ENCODE measurements at regions of chr6 and their contacts with region 1.

Region 1: GRCh38 chr6:85482905-85483700 is 33.2 kb downstream of the NT5E start:
- DNase-seq: no peak
- ATAC-seq: peak; percentile 98
- H3K4me3 ChIP-seq: no peak overlapping the region
- H3K27ac ChIP-seq: no peak overlapping the region
- H3K4me1 ChIP-seq: no peaks in the 10 kb centered on the region
- H3K27me3 ChIP-seq: no peaks in the 10 kb centered on the region
- CTCF ChIP-seq: peak; percentile 98 to 100 (median 99); a peak in 5 of 6 replicates
- EP300 ChIP-seq: no peak
- POLR2A ChIP-seq: no peak
- RAD21 ChIP-seq: peak; percentile 91

Region 2: DNA sequence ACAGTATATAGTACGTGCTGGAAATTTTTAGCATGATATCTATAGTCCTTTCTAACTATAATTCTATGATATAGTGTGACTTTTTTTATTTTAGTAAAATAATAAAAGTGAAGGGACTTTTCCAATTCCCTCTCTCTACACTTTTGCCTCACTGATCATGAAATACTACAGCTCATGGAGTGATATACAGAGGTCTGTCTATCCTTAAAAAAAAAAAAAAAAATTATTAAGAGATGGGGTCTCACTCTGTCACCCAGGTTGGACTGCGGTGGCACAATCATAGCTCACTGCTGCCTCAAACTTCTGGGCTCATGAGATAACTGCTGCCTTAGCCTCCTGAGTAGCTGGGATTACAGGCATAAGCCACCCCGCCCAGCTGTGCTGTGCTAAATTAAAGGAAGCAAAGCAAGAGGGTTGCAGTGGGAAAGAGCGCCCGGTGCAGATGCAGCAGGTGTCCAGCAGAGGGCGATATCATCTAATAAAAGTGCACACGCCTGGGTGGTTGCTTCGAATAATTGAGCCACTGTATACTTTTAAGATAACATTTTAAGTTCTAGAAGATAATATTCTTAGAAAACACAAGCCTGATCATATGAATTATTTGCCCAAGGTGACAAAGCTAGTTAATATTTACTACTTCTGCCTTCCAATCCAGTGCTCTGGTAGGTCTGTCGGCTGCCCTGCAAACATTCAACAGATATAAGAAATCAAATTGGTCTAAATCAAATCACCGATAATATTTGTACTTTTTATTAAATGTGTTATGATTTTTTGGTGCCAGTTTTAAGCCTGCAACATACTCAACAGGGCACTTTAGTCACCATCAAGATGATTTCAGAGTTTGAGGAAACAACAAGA is 128.1 kb before region 1 on chr6:
- CTCF ChIA-PET with region 1: interaction called, 217 read pairs
- POLR2A ChIA-PET with region 1: interaction called, 3 read pairs
- RAD21 ChIA-PET with region 1: interaction called, 113 read pairs
- SMC1A ChIA-PET with region 1: interaction called, 162 read pairs
- in situ Hi-C with region 1: loop called (anchors 5 kb)
- intact Hi-C with region 1: loop called (anchors 1 kb)
- DNase-seq: peak; percentile 25
- ATAC-seq: peak; percentile 99
- H3K4me3 ChIP-seq: no peak overlapping the region
- H3K27ac ChIP-seq: no peak overlapping the region
- H3K4me1 ChIP-seq: no peaks in the 10 kb centered on the region
- H3K27me3 ChIP-seq: no peaks in the 10 kb centered on the region
- CTCF ChIP-seq: peak; percentile 90 to 93 (median 91)
- EP300 ChIP-seq: no peak
- POLR2A ChIP-seq: no peak
- RAD21 ChIP-seq: peak; percentile 96

Region 3: DNA sequence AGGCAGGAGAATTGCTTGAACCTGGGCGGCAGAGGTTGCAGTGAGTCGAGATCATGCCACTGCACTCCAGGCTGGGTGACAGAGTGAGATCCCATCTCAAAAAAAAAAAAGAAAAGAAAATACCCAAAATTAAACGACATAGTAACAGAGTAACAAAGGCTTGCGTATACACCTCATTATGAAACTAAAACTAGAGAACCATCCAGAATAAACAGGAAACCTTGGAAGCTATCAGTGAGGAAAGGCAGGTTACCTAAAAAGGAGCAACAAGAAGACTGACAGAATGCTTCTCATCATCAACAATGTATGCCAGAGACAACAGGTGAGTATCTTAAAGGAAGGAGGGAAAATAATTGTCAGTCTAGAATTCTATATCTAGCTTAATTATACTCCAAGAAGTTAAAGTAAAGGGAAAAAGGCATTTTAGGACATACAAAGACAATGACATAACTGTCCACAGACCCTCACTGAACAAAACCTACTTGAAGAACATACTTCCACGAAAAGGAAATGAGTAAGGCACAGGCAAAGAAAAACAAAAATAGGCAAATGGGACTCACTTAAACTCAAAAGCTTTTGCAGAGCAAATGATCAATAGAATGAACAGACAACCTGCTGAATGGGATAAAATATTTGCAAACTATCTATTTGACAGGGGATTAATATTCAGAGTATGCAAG is 97.3 kb before region 1 on chr6:
- CTCF ChIA-PET with region 1: interaction called, 10 read pairs
- POLR2A ChIA-PET with region 1: no interaction called
- RAD21 ChIA-PET with region 1: interaction called, 5 read pairs
- SMC1A ChIA-PET with region 1: interaction called, 10 read pairs
- in situ Hi-C with region 1: no loop called
- intact Hi-C with region 1: no loop called
- DNase-seq: no peak
- ATAC-seq: no peak
- H3K4me3 ChIP-seq: no peak overlapping the region
- H3K27ac ChIP-seq: no peak overlapping the region
- H3K4me1 ChIP-seq: no peaks in the 10 kb centered on the region
- H3K27me3 ChIP-seq: no peaks in the 10 kb centered on the region
- CTCF ChIP-seq: no peak
- EP300 ChIP-seq: no peak
- POLR2A ChIP-seq: no peak
- RAD21 ChIP-seq: no peak

Region 4: GRCh38 chr6:85419046-85419759 is 63.9 kb before region 1 on chr6:
- CTCF ChIA-PET with region 1: interaction called, 17 read pairs
- POLR2A ChIA-PET with region 1: no interaction called
- RAD21 ChIA-PET with region 1: no interaction called
- SMC1A ChIA-PET with region 1: interaction called, 11 read pairs
- in situ Hi-C with region 1: no loop called
- intact Hi-C with region 1: no loop called
- DNase-seq: no peak
- ATAC-seq: peak; percentile 85
- H3K4me3 ChIP-seq: 0 out of 2 replicates have a peak overlapping the region, but pooled peaks have one; percentile 24
- H3K27ac ChIP-seq: 0 out of 2 replicates have a peak overlapping the region, but pooled peaks have one; percentile 15
- H3K4me1 ChIP-seq: peaks cover 9% of the 10 kb centered on the region
- H3K27me3 ChIP-seq: no peaks in the 10 kb centered on the region
- CTCF ChIP-seq: no peak
- EP300 ChIP-seq: peak in 1 of 2 experiments; percentile 74; a peak in 1 of 4 replicates
- POLR2A ChIP-seq: no peak
- RAD21 ChIP-seq: no peak

Region 5: DNA sequence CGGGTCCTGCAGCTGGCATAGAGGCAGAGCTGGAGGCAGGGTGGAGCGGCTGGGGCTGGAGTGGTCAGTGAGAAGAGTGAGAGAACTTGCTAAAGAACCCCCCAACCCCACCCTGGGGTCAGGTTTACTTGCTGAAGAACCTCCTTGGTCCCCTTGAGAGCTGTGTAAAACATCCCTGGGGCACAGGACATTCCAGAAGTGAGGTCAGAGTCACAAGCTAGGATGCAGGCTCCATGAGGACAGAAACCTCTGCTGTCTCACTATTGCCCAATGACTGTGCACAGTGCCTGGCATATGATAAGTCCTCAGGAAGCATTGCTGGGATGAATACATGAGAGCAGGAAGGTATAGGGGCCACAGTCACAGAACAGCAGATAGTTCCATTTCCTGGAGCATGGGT is 14.8 kb before region 1 on chr6:
- CTCF ChIA-PET with region 1: interaction called, 52 read pairs
- POLR2A ChIA-PET with region 1: no interaction called
- RAD21 ChIA-PET with region 1: interaction called, 25 read pairs
- SMC1A ChIA-PET with region 1: interaction called, 57 read pairs
- in situ Hi-C with region 1: no loop called
- intact Hi-C with region 1: no loop called
- DNase-seq: no peak
- ATAC-seq: no peak
- H3K4me3 ChIP-seq: no peak overlapping the region
- H3K27ac ChIP-seq: no peak overlapping the region
- H3K4me1 ChIP-seq: peaks cover 19% of the 10 kb centered on the region
- H3K27me3 ChIP-seq: no peaks in the 10 kb centered on the region
- CTCF ChIP-seq: no peak
- EP300 ChIP-seq: no peak
- POLR2A ChIP-seq: no peak
- RAD21 ChIP-seq: no peak

Region 6: DNA sequence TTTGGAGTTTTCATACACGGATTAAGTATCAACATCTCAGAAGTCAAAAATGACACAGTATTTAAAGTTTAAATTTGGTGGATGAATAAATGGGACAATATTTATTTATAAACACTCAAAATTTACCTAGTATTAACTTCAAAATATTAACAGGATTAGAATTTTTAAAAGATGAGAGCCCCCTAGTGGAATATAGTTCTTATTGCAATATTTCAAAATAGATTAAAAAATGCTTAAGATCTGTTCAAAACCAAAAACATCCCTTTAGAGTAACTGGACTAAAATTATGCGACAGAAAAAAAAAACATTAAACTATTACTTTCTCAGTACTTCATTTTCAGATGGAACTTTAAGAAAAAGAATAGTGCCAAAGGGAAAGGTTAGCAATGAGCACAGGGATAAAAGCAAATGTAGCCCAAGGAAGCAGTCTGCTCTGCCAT is 54.0 kb after region 1 on chr6:
- CTCF ChIA-PET with region 1: interaction called, 50 read pairs
- POLR2A ChIA-PET with region 1: no interaction called
- RAD21 ChIA-PET with region 1: interaction called, 21 read pairs
- SMC1A ChIA-PET with region 1: interaction called, 29 read pairs
- in situ Hi-C with region 1: no loop called
- intact Hi-C with region 1: no loop called
- DNase-seq: no peak
- ATAC-seq: no peak
- H3K4me3 ChIP-seq: no peak overlapping the region
- H3K27ac ChIP-seq: no peak overlapping the region
- H3K4me1 ChIP-seq: no peaks in the 10 kb centered on the region
- H3K27me3 ChIP-seq: no peaks in the 10 kb centered on the region
- CTCF ChIP-seq: peak in 2 of 3 experiments; percentile 25 to 38; a peak in 3 of 6 replicates
- EP300 ChIP-seq: no peak
- POLR2A ChIP-seq: no peak
- RAD21 ChIP-seq: peak; percentile 1; the same call in 1 of the 2 replicates

Region 7: GRCh38 chr6:85628353-85628752 is 145.2 kb after region 1 on chr6:
- CTCF ChIA-PET with region 1: no interaction called
- POLR2A ChIA-PET with region 1: no interaction called
- RAD21 ChIA-PET with region 1: no interaction called
- SMC1A ChIA-PET with region 1: no interaction called
- in situ Hi-C with region 1: no loop called
- intact Hi-C with region 1: no loop called
- DNase-seq: no peak
- ATAC-seq: no peak
- H3K4me3 ChIP-seq: no peak overlapping the region
- H3K27ac ChIP-seq: no peak overlapping the region
- H3K4me1 ChIP-seq: no peaks in the 10 kb centered on the region
- H3K27me3 ChIP-seq: no peaks in the 10 kb centered on the region
- CTCF ChIP-seq: no peak
- EP300 ChIP-seq: no peak
- POLR2A ChIP-seq: no peak
- RAD21 ChIP-seq: no peak

Region 8: GRCh38 chr6:85660181-85660611 is 177.1 kb after region 1 on chr6:
- CTCF ChIA-PET with region 1: no interaction called
- POLR2A ChIA-PET with region 1: no interaction called
- RAD21 ChIA-PET with region 1: no interaction called
- SMC1A ChIA-PET with region 1: no interaction called
- in situ Hi-C with region 1: no loop called
- intact Hi-C with region 1: no loop called
- DNase-seq: no peak
- ATAC-seq: no peak
- H3K4me3 ChIP-seq: no peak overlapping the region
- H3K27ac ChIP-seq: no peak overlapping the region
- H3K4me1 ChIP-seq: no peaks in the 10 kb centered on the region
- H3K27me3 ChIP-seq: no peaks in the 10 kb centered on the region
- CTCF ChIP-seq: 0 out of 6 replicates have a peak, but pooled peaks of 1 of the 3 experiments have one; percentile 2
- EP300 ChIP-seq: no peak
- POLR2A ChIP-seq: no peak
- RAD21 ChIP-seq: no peak